Common myeloid progenitor, CD34-positive (primary cell): ENCODE measurements at regions of chr2 and their contacts with region 1.

Region 1: GRCh38 chr2:127453392-127454171 is 35.4 kb downstream of the PROC start:
- DNase-seq: peak; percentile 7 to 28 (median 10)
- H3K4me3 ChIP-seq: no peak overlapping the region
- H3K27ac ChIP-seq: no peak overlapping the region
- H3K4me1 ChIP-seq: no peaks in the 10 kb centered on the region
- H3K27me3 ChIP-seq: no peaks in the 10 kb centered on the region

Region 2: GRCh38 chr2:127437056-127437455 is 16.5 kb before region 1 on chr2:
- CTCF ChIA-PET with region 1: interaction called, 10 read pairs
- POLR2A ChIA-PET with region 1: no interaction called
- DNase-seq: no peak
- H3K4me3 ChIP-seq: no peak overlapping the region
- H3K27ac ChIP-seq: no peak overlapping the region
- H3K4me1 ChIP-seq: no peaks in the 10 kb centered on the region
- H3K27me3 ChIP-seq: no peaks in the 10 kb centered on the region

Region 3: GRCh38 chr2:127498386-127498785 is 44.8 kb after region 1 on chr2:
- CTCF ChIA-PET with region 1: no interaction called
- POLR2A ChIA-PET with region 1: no interaction called
- DNase-seq: peak in 2 of 3 donors; percentile 32 to 35
- H3K4me3 ChIP-seq: no peak overlapping the region
- H3K27ac ChIP-seq: no peak overlapping the region
- H3K4me1 ChIP-seq: no peaks in the 10 kb centered on the region
- H3K27me3 ChIP-seq: no peaks in the 10 kb centered on the region